Transverse colon (tissue), 4 donors: ENCODE measurements at regions of chr5 and their contacts with region 1.

Region 1: GRCh38 chr5:173420108-173420507 is 91.9 kb upstream of the STC2 start:
- DNase-seq: no peak
- H3K4me3 ChIP-seq: no peak overlapping the region
- H3K27ac ChIP-seq: peak overlapping the region in 2 of 4 donors; percentile 9 to 25
- H3K4me1 ChIP-seq: no peaks in the 10 kb centered on the region
- H3K27me3 ChIP-seq: no peaks in the 10 kb centered on the region
- CTCF ChIP-seq: no peak
- EP300 ChIP-seq: no peak
- POLR2A ChIP-seq: no peak

Region 2: GRCh38 chr5:174777583-174777982 is 1357.5 kb after region 1 on chr5:
- in situ Hi-C with region 1: no loop called
- intact Hi-C with region 1: loop called (anchors 5 kb)
- DNase-seq: no peak
- H3K4me3 ChIP-seq: no peak overlapping the region
- H3K27ac ChIP-seq: no peak overlapping the region
- H3K4me1 ChIP-seq: no peaks in the 10 kb centered on the region
- H3K27me3 ChIP-seq: no peaks in the 10 kb centered on the region
- CTCF ChIP-seq: no peak
- EP300 ChIP-seq: no peak
- POLR2A ChIP-seq: no peak